ENCODE measurements at regions of chr5 and their contacts with region 1.

Region 1: DNA sequence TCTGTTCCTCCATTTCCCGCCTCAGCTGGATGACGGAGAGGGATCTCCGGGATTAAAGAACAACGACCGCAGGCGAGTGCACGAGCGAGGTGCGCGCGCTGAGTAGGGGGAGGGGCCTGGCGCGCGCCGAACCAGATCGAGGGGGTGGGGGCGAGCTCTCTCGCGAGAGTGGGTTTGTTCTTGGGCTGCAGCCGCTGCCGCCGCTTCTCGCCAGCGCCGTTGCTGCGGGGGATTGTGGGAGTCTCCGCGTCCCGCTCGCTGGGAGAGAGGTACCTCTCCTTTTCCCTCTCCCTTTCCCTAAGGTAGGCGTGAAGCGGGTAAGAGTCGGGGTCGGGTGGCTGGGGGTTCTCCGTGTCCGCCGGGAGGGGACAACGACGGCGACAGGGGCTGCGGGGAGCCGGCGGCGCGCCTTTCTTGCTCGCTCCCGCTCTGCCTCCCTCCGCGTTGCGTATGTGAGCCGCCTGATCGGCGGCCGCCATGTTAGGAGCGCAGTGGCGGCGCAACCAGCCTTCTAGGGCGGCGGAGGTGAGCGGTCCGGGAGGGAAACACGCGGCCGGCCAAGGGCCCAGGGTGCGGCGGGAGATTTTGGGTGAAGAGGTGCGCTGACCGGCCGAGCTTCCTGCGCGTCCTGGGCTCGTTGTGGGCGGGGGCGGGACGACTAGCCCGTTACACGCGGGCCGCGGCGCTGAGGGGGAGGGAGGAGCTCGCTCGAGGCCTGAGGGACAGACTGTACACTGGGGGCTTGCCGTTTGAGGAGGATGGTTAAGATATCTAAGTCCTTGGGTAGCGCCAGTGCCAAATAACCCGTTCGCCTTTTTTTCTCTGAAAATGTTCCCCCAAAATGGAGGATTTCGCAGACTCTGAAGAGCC is at the start of gene MATR3:
- DNase-seq: peak; percentile 97
- H3K4me3 Mint-ChIP-seq: peak within 1 kb of the TSS; percentile 96
- H3K27ac Mint-ChIP-seq: peak within 1 kb of the TSS; percentile 97
- H3K4me1 Mint-ChIP-seq: peaks cover 38% of the 10 kb centered on the region
- H3K27me3 Mint-ChIP-seq: no peaks in the 10 kb centered on the region
- total RNA-seq, gene MATR3: 243 and 258 TPM in 2 replicates

Region 2: DNA sequence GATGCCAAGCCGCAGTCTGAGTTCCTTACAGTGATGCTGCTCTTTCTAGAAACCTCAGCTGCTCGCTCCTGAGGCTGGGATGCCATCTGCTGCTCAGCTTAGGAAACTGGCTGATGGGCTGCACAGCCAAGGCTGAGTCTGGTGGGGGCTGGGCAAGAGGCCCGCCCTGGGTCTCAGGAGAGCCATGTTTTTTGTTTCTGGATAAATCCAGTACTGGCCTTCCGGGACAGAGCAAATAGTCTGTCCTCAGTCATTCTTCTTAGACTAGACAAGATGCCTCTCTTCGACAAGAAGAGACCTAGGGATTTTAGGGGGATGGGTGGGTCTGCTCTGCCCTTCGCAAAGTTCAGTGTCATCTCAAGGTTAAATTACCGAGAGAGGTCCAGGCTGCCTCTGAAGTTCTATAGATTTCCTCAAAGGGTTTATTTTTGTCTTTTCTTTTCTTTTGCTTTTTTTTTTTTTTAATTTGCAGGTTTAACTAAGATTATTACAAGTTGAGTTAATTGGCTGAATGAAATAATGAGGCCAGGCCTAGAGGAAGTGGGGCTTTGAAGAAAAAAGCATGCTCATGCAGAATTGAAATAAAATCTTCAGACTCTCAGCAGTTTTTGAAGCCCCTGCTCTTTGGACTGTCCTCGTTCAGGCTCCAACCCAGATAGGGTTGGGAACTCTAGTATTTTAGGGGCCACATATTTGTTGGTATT is 30.8 kb before region 1 on chr5:
- intact Hi-C with region 1: no loop called
- DNase-seq: peak; percentile 90
- H3K4me3 Mint-ChIP-seq: no peak overlapping the region
- H3K27ac Mint-ChIP-seq: no peak overlapping the region
- H3K4me1 Mint-ChIP-seq: peaks cover 2% of the 10 kb centered on the region
- H3K27me3 Mint-ChIP-seq: peaks cover 28% of the 10 kb centered on the region

Region 3: GRCh38 chr5:139273572-139274289 is 20.0 kb before region 1 on chr5:
- intact Hi-C with region 1: loop called (anchors 1 kb)
- DNase-seq: peak; percentile 97
- H3K4me3 Mint-ChIP-seq: peak overlapping the region; percentile 97
- H3K27ac Mint-ChIP-seq: peak overlapping the region; percentile 94
- H3K4me1 Mint-ChIP-seq: peaks cover 42% of the 10 kb centered on the region
- H3K27me3 Mint-ChIP-seq: peaks cover 2% of the 10 kb centered on the region

Region 4: GRCh38 chr5:139306197-139306596 is 12.5 kb after region 1 on chr5:
- intact Hi-C with region 1: loop called (anchors 1 kb)
- DNase-seq: no peak
- H3K4me3 Mint-ChIP-seq: peak overlapping the region; percentile 2
- H3K27ac Mint-ChIP-seq: peak overlapping the region; percentile 68
- H3K4me1 Mint-ChIP-seq: peaks cover 60% of the 10 kb centered on the region
- H3K27me3 Mint-ChIP-seq: no peaks in the 10 kb centered on the region

Region 5: GRCh38 chr5:139341650-139342422 is 48.1 kb after region 1 on chr5 and contains the start of gene PAIP2:
- intact Hi-C with region 1: loop called (anchors 1 kb)
- DNase-seq: peak; percentile 99
- H3K4me3 Mint-ChIP-seq: peak within 1 kb of the TSS; percentile 97
- H3K27ac Mint-ChIP-seq: peak within 1 kb of the TSS; percentile 100
- H3K4me1 Mint-ChIP-seq: peaks cover 39% of the 10 kb centered on the region
- H3K27me3 Mint-ChIP-seq: no peaks in the 10 kb centered on the region
- total RNA-seq, gene PAIP2: 83.3 and 93.8 TPM in 2 replicates

Region 6: GRCh38 chr5:139453683-139454569 is 160.2 kb after region 1 on chr5:
- intact Hi-C with region 1: no loop called
- DNase-seq: peak; percentile 78
- H3K4me3 Mint-ChIP-seq: peak overlapping the region; percentile 1
- H3K27ac Mint-ChIP-seq: peak overlapping the region; percentile 80
- H3K4me1 Mint-ChIP-seq: peaks cover 40% of the 10 kb centered on the region
- H3K27me3 Mint-ChIP-seq: peaks cover 2% of the 10 kb centered on the region

Measured in activated CD4-positive, alpha-beta T cell treated with anti-CD3 and anti-CD28 coated beads, Interleukin-2, amount 10 ng/mL, durations not matched to agents 24 days and 14 days (primary cell).